ENCODE measurements at regions of chr4 and their contacts with region 1.

Region 1: DNA sequence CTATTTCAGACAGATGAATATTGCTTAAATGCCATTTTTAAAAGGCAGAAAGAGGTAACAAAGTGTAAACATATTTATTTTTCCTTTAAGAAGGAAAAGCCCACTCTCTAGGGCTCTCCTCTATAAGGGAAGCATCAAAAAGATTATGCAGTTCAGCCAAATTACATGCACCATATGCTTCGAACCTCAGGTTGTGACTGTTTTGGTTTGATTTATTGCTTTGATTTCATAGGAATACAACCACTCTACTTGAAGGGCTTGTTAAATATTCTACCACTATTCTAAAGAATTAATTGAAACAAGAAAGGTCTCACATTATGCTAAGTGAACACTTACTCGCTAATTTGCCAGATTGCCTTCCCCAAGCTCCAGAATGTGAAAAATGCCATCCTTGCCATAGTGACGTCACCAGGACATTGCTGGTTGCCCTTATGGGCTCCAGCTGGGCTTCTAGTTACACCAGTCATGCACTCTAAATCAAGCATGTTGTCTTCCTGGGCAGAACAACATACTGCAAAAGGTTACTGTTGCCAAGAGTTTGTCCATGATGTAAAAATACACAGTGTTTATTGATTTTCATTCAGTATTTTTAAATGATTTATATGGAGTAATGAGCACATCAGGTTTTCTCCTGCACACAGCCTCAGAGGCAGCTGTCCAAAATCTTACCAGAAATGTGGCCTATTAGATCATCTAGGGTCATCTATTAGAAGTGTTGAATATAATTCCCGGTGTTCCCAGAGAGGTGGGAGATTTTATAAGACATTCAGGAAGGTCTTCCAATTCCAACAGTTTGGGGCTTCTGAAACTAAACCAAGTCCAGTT is 164.4 kb upstream of the RAPGEF2 start:
- DNase-seq: peak in 1 of 10 donors; percentile 8
- H3K4me3 ChIP-seq: no peak overlapping the region
- H3K27ac ChIP-seq: no peak overlapping the region
- H3K27me3 ChIP-seq: no peaks in the 10 kb centered on the region
- CTCF ChIP-seq: no peak

Region 2: GRCh38 chr4:159077702-159078495 is 139.5 kb after region 1 on chr4:
- intact Hi-C with region 1: no loop called
- DNase-seq: no peak
- H3K4me3 ChIP-seq: peak overlapping the region in 2 of 59 donors; percentile 13 to 15
- H3K27ac ChIP-seq: no peak overlapping the region
- H3K27me3 ChIP-seq: no peaks in the 10 kb centered on the region
- CTCF ChIP-seq: no peak

Region 3: GRCh38 chr4:159312236-159312635 is 373.8 kb after region 1 on chr4:
- intact Hi-C with region 1: loop called in 1 of 2 experiments (anchors 5 kb)
- DNase-seq: no peak
- H3K4me3 ChIP-seq: no peak overlapping the region
- H3K27ac ChIP-seq: peak overlapping the region in 2 of 59 donors; percentile 7 to 10
- H3K27me3 ChIP-seq: no peaks in the 10 kb centered on the region
- CTCF ChIP-seq: no peak

Measured in dorsolateral prefrontal cortex (tissue), 120 donors.